Activated CD8-positive, alpha-beta T cell treated with anti-CD3 and anti-CD28 coated beads, Interleukin-2, amount 10 ng/mL, durations not matched to agents 7 days and 5 days (primary cell): ENCODE measurements at regions of chr1 and their contacts with region 1.

Region 1: GRCh38 chr1:1122078-1122811 is 6.4 kb upstream of the C1orf159 start:
- DNase-seq: peak; percentile 87
- ATAC-seq: peak; percentile 97
- H3K4me3 Mint-ChIP-seq: no peak overlapping the region
- H3K27ac Mint-ChIP-seq: no peak overlapping the region
- H3K4me1 Mint-ChIP-seq: peaks cover 19% of the 10 kb centered on the region
- H3K27me3 Mint-ChIP-seq: peaks cover 6% of the 10 kb centered on the region

Region 2: GRCh38 chr1:1132042-1132950 is 10.1 kb after region 1 on chr1:
- CTCF ChIA-PET with region 1: interaction called, 13 read pairs
- POLR2A ChIA-PET with region 1: interaction called, 3 read pairs
- DNase-seq: no peak
- ATAC-seq: no peak
- H3K4me3 Mint-ChIP-seq: no peak overlapping the region
- H3K27ac Mint-ChIP-seq: no peak overlapping the region
- H3K4me1 Mint-ChIP-seq: peaks cover 9% of the 10 kb centered on the region
- H3K27me3 Mint-ChIP-seq: peaks cover 3% of the 10 kb centered on the region

Region 3: DNA sequence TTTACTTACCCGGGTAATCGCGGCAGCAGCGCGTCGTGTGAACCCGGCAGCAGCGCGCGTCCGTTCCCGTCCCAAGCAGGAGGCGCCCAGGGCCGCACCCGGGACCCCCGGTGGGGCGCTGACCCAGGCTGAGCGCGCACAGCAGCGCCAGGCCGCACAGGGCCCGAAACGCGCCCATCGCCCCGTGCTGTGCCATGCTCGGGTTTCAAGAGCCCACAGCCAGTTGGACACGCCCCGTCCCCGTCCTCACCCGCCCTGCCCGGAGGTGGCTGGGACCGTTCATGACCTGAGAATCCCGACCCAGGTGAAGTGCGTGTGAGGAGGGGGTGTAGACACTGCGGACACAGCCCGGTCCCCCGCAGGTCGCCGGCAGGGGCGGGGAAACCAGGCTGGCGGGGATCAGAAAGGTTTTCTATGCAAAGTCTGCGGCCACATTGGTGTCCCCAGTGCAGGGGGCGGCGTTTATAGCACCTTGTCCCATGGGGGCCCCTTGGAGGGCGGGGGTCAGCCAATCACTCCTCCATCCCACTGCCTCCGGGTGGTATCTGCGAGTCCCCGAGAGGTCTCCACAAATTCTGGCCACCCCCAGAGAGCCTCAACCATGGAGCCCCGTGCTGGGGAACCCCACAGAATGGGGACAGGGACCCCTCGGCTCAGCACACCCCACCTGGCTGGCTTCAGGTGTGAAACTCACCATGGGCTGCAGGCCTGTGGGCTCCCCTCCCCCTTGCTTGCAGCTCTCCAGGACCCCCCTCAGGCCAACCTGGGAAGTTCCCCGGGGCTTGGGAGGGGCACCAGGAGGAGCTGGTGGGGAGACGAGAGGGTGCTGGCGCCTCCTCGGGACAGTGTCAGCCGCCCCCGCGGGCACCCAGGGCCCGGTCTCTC is 84.4 kb after region 1 on chr1 and contains the start of gene TNFRSF18:
- CTCF ChIA-PET with region 1: interaction called, 16 read pairs
- POLR2A ChIA-PET with region 1: interaction called, 4 read pairs
- DNase-seq: no peak
- ATAC-seq: peak; percentile 32
- H3K4me3 Mint-ChIP-seq: peak within 1 kb of the TSS; percentile 61
- H3K27ac Mint-ChIP-seq: peak within 1 kb of the TSS; percentile 43
- H3K4me1 Mint-ChIP-seq: peaks cover 31% of the 10 kb centered on the region
- H3K27me3 Mint-ChIP-seq: no peaks in the 10 kb centered on the region
- total RNA-seq, gene TNFRSF18: 17.5 to 18.8 TPM

Region 4: GRCh38 chr1:1231400-1232223 is 109.4 kb after region 1 on chr1 and contains the start of gene SDF4:
- CTCF ChIA-PET with region 1: interaction called, 37 read pairs
- POLR2A ChIA-PET with region 1: interaction called, 5 read pairs
- DNase-seq: peak; percentile 97
- ATAC-seq: peak; percentile 96
- H3K4me3 Mint-ChIP-seq: peak within 1 kb of the TSS; percentile 95
- H3K27ac Mint-ChIP-seq: peak within 1 kb of the TSS; percentile 94
- H3K4me1 Mint-ChIP-seq: peaks cover 31% of the 10 kb centered on the region
- H3K27me3 Mint-ChIP-seq: no peaks in the 10 kb centered on the region
- total RNA-seq, gene SDF4: 96.9 to 99.3 TPM

Region 5: DNA sequence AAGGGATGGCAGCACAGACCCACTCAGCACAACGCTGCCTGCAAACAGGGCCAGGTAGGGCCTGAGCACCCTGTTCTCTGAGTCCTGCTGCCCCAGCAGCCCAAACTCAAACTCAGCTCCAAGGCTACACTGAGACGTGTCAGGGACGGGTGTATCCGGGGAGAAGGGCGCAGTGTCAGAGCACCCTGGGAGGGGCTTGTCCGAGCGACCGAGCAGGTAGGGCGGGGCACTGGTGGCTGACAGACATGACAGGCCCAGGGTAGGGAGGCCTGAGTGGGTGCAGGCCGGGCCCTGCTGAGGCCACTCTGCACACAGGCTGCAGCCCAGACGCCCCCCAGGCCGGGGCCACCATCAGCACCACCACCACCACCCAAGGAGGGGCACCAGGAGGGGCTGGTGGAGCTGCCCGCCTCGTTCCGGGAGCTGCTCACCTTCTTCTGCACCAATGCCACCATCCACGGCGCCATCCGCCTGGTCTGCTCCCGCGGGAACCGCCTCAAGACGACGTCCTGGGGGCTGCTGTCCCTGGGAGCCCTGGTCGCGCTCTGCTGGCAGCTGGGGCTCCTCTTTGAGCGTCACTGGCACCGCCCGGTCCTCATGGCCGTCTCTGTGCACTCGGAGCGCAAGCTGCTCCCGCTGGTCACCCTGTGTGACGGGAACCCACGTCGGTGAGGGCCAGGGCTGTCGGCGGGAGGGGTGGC is 163.5 kb after region 1 on chr1:
- CTCF ChIA-PET with region 1: interaction called, 61 read pairs
- POLR2A ChIA-PET with region 1: no interaction called
- DNase-seq: no peak
- ATAC-seq: peak; percentile 9
- H3K4me3 Mint-ChIP-seq: no peak overlapping the region
- H3K27ac Mint-ChIP-seq: no peak overlapping the region
- H3K4me1 Mint-ChIP-seq: no peaks in the 10 kb centered on the region
- H3K27me3 Mint-ChIP-seq: no peaks in the 10 kb centered on the region

Region 6: GRCh38 chr1:1305300-1306069 is 183.2 kb after region 1 on chr1:
- CTCF ChIA-PET with region 1: interaction called, 16 read pairs
- POLR2A ChIA-PET with region 1: interaction called, 3 read pairs
- DNase-seq: peak; percentile 89
- ATAC-seq: peak; percentile 62
- H3K4me3 Mint-ChIP-seq: peak overlapping the region; percentile 84
- H3K27ac Mint-ChIP-seq: peak overlapping the region; percentile 95
- H3K4me1 Mint-ChIP-seq: peaks cover 23% of the 10 kb centered on the region
- H3K27me3 Mint-ChIP-seq: no peaks in the 10 kb centered on the region

Region 7: GRCh38 chr1:1479547-1480487 is 357.6 kb after region 1 on chr1:
- CTCF ChIA-PET with region 1: no interaction called
- POLR2A ChIA-PET with region 1: no interaction called
- DNase-seq: no peak
- ATAC-seq: no peak
- H3K4me3 Mint-ChIP-seq: no peak overlapping the region
- H3K27ac Mint-ChIP-seq: no peak overlapping the region
- H3K4me1 Mint-ChIP-seq: peaks cover 1% of the 10 kb centered on the region
- H3K27me3 Mint-ChIP-seq: no peaks in the 10 kb centered on the region